GM12878 (cell line): ENCODE measurements at regions of chr3 and their contacts with region 1.

Region 1: DNA sequence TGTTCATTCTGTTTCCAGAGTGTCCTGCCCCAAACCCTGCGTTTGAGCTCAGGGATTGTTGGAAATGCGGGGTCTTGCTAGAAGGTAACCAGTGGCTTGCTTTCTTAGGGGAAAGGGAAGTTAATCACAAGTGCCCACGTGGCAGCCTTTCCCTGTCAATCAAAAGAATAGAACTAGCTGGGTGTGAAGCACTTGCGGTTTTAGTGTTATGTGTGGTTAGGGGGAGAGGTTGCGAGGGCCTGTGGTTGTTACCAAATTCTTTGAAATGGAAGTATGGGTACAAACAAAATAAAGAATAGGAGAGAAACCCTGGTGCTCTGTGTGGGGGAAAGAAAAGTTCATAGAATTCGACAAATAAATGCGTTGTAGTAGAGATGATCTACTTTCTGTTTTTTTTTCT is 67.6 kb downstream of the FNDC3B start:
- DNase-seq: peak; percentile 70
- ATAC-seq: peak; percentile 67
- H3K4me3 ChIP-seq: peak overlapping the region; percentile 20; the same call in 1 of the 2 replicates
- H3K27ac ChIP-seq: peak overlapping the region; percentile 81
- H3K4me1 ChIP-seq: peaks cover 53% of the 10 kb centered on the region
- H3K27me3 ChIP-seq: no peaks in the 10 kb centered on the region
- CTCF ChIP-seq: no peak
- EP300 ChIP-seq: peak in 1 of 2 experiments; percentile 74; a peak in 2 of 4 replicates
- POLR2A ChIP-seq: no peak
- RAD21 ChIP-seq: no peak

Region 2: DNA sequence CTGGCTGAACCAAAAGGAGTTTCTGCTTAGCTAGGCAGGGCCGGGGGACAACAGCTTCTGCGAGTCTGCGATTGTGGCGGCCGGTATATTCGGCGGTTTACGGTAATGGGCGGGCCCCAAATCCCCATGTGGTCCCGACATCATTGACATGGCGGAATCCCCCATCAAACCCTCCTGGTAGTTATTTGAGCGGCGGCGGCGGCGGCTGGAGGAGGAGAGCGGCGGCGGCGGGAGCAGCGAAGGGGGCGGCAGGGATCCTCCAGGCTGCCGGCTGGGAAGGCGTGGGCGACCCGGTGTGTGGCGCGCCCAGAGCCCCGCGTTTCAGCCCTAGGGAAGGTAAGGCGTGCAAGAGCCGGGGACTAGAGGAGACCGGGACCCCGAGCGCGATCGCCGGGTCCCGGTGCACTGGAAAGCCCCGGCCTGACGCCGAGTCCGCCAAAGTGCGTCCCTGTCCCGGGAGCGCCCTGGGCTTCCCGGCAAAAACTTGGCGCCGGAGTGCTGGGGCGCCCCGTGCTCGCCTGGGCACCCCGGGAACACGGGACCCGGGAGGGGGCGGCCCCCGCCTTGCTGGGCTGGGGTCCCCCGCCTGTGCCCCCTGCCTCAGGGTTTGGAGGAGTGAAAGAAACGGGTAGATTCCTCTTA is 67.4 kb before region 1 on chr3 and contains the start of gene FNDC3B:
- CTCF ChIA-PET with region 1: interaction called, 13 read pairs
- POLR2A ChIA-PET with region 1: interaction called, 16 read pairs
- RAD21 ChIA-PET with region 1: interaction called, 70 read pairs
- SMC1A ChIA-PET with region 1: interaction called, 110 read pairs
- in situ Hi-C with region 1: no loop called
- intact Hi-C with region 1: loop called (anchors 1 kb)
- DNase-seq: peak; percentile 59
- ATAC-seq: peak; percentile 82
- H3K4me3 ChIP-seq: peak within 1 kb of the TSS; percentile 91
- H3K27ac ChIP-seq: peak within 1 kb of the TSS; percentile 93
- H3K4me1 ChIP-seq: peaks cover 24% of the 10 kb centered on the region
- H3K27me3 ChIP-seq: no peaks in the 10 kb centered on the region
- CTCF ChIP-seq: no peak
- EP300 ChIP-seq: 0 out of 4 replicates have a peak, but pooled peaks of 1 of the 2 experiments have one; percentile 14
- POLR2A ChIP-seq: peak; percentile 90
- RAD21 ChIP-seq: peak; percentile 41; the same call in 1 of the 2 replicates
- polyA plus RNA-seq, gene FNDC3B: 7.9 to 11.9 TPM

Region 3: GRCh38 chr3:172061724-172062184 is 45.2 kb before region 1 on chr3:
- CTCF ChIA-PET with region 1: interaction called, 4 read pairs
- POLR2A ChIA-PET with region 1: interaction called, 5 read pairs
- RAD21 ChIA-PET with region 1: interaction called, 12 read pairs
- SMC1A ChIA-PET with region 1: interaction called, 16 read pairs
- in situ Hi-C with region 1: no loop called
- intact Hi-C with region 1: loop called (anchors 1 kb)
- DNase-seq: peak; percentile 84
- ATAC-seq: peak; percentile 90
- H3K4me3 ChIP-seq: peak overlapping the region; percentile 9; the same call in 1 of the 2 replicates
- H3K27ac ChIP-seq: peak overlapping the region; percentile 76
- H3K4me1 ChIP-seq: peaks cover 19% of the 10 kb centered on the region
- H3K27me3 ChIP-seq: no peaks in the 10 kb centered on the region
- CTCF ChIP-seq: no peak
- EP300 ChIP-seq: peak; percentile 85 to 89
- POLR2A ChIP-seq: no peak
- RAD21 ChIP-seq: no peak

Region 4: GRCh38 chr3:172129870-172130683 is 23.1 kb after region 1 on chr3:
- CTCF ChIA-PET with region 1: interaction called, 8 read pairs
- POLR2A ChIA-PET with region 1: interaction called, 6 read pairs
- RAD21 ChIA-PET with region 1: interaction called, 13 read pairs
- SMC1A ChIA-PET with region 1: interaction called, 64 read pairs
- in situ Hi-C with region 1: no loop called
- intact Hi-C with region 1: loop called (anchors 1 kb)
- DNase-seq: no peak
- ATAC-seq: peak; percentile 12; the same call in 1 of the 3 replicates
- H3K4me3 ChIP-seq: no peak overlapping the region
- H3K27ac ChIP-seq: no peak overlapping the region
- H3K4me1 ChIP-seq: peaks cover 29% of the 10 kb centered on the region
- H3K27me3 ChIP-seq: no peaks in the 10 kb centered on the region
- CTCF ChIP-seq: no peak
- EP300 ChIP-seq: no peak
- POLR2A ChIP-seq: no peak
- RAD21 ChIP-seq: no peak

Region 5: GRCh38 chr3:172153335-172153861 is 46.4 kb after region 1 on chr3:
- CTCF ChIA-PET with region 1: interaction called, 3 read pairs
- POLR2A ChIA-PET with region 1: interaction called, 13 read pairs
- RAD21 ChIA-PET with region 1: interaction called, 37 read pairs
- SMC1A ChIA-PET with region 1: interaction called, 50 read pairs
- in situ Hi-C with region 1: no loop called
- intact Hi-C with region 1: no loop called
- DNase-seq: no peak
- ATAC-seq: peak; percentile 72
- H3K4me3 ChIP-seq: peak overlapping the region; percentile 22; the same call in 1 of the 2 replicates
- H3K27ac ChIP-seq: peak overlapping the region; percentile 78
- H3K4me1 ChIP-seq: peaks cover 25% of the 10 kb centered on the region
- H3K27me3 ChIP-seq: no peaks in the 10 kb centered on the region
- CTCF ChIP-seq: no peak
- EP300 ChIP-seq: no peak
- POLR2A ChIP-seq: no peak; the same call in 1 of the 2 replicates
- RAD21 ChIP-seq: no peak

Region 6: DNA sequence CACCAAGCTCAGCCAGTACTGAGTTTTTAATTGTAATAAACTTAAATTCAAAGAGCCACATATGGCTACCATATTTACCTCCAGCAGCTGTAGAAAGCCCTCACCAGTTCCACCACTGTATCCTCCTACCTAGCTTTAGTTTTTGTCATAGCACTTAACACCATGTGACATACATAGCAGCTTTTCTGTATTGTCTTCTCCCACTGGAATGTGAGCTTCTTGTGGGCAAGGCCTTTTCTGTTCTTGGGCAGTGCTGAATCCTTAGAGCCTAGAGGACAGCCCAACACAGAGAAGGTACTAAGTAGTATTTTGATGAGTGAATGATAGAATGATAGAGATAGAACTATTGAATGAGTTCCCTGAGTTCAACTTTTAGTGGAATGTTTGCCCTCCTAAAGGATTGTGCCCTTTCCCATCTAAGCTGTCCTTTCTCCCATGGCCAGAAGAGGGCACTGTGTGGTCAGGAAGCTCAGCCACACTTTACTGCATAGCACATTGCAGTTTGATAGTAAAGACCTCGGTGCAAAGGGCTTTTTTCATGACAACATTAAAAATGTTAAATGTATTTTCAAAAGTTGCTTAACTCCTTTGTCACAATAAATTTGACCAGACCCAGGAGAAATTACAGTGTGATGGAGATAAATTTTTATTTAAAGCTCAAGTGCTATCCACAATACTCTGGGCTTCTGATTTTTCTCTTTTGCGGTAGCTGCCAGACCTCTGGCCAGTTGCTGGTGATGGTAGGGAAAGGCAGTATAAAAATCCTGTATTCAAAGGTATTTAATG is 225.5 kb after region 1 on chr3:
- CTCF ChIA-PET with region 1: interaction called, 7 read pairs
- POLR2A ChIA-PET with region 1: no interaction called
- RAD21 ChIA-PET with region 1: interaction called, 7 read pairs
- SMC1A ChIA-PET with region 1: interaction called, 11 read pairs
- in situ Hi-C with region 1: no loop called
- intact Hi-C with region 1: no loop called
- DNase-seq: no peak
- ATAC-seq: peak; percentile 97
- H3K4me3 ChIP-seq: no peak overlapping the region
- H3K27ac ChIP-seq: no peak overlapping the region
- H3K4me1 ChIP-seq: no peaks in the 10 kb centered on the region
- H3K27me3 ChIP-seq: no peaks in the 10 kb centered on the region
- CTCF ChIP-seq: peak; percentile 81 to 90 (median 88)
- EP300 ChIP-seq: no peak
- POLR2A ChIP-seq: no peak
- RAD21 ChIP-seq: peak; percentile 63